ENCODE measurements at regions of chr1 and their contacts with region 1.

Region 1: GRCh38 chr1:146012737-146013403 is 8.7 kb downstream of the HJV start:
- DNase-seq: no peak
- ATAC-seq: peak; percentile 15 to 18
- H3K4me3 ChIP-seq: no peak overlapping the region
- H3K27ac ChIP-seq: no peak overlapping the region
- H3K4me1 ChIP-seq: peaks cover 1% of the 10 kb centered on the region
- H3K27me3 ChIP-seq: no peaks in the 10 kb centered on the region

Region 2: GRCh38 chr1:145845514-145846161 is 167.2 kb before region 1 on chr1 and contains the start of gene NUDT17:
- intact Hi-C with region 1: loop called (anchors 5 to 10 kb)
- DNase-seq: peak; percentile 87 to 94 (median 92)
- ATAC-seq: peak; percentile 85 to 88
- H3K4me3 ChIP-seq: peak within 1 kb of the TSS; percentile 63
- H3K27ac ChIP-seq: peak within 1 kb of the TSS; percentile 63
- H3K4me1 ChIP-seq: no peaks in the 10 kb centered on the region
- H3K27me3 ChIP-seq: no peaks in the 10 kb centered on the region
- total RNA-seq, gene NUDT17: 4.1 to 7.2 (median 5.1) TPM

Region 3: GRCh38 chr1:145891587-145892485 is 121.0 kb before region 1 on chr1:
- intact Hi-C with region 1: loop called (anchors 5 to 10 kb)
- DNase-seq: peak; percentile 93 to 97 (median 94)
- ATAC-seq: peak; percentile 89 to 92
- H3K4me3 ChIP-seq: peak overlapping the region; percentile 2
- H3K27ac ChIP-seq: peak overlapping the region; percentile 86
- H3K4me1 ChIP-seq: peaks cover 9% of the 10 kb centered on the region
- H3K27me3 ChIP-seq: no peaks in the 10 kb centered on the region

Region 4: GRCh38 chr1:145906954-145907753 is 105.7 kb before region 1 on chr1:
- intact Hi-C with region 1: no loop called
- DNase-seq: no peak
- ATAC-seq: peak; percentile 40 to 81
- H3K4me3 ChIP-seq: no peak overlapping the region
- H3K27ac ChIP-seq: peak overlapping the region; percentile 69
- H3K4me1 ChIP-seq: peaks cover 5% of the 10 kb centered on the region
- H3K27me3 ChIP-seq: no peaks in the 10 kb centered on the region

Region 5: DNA sequence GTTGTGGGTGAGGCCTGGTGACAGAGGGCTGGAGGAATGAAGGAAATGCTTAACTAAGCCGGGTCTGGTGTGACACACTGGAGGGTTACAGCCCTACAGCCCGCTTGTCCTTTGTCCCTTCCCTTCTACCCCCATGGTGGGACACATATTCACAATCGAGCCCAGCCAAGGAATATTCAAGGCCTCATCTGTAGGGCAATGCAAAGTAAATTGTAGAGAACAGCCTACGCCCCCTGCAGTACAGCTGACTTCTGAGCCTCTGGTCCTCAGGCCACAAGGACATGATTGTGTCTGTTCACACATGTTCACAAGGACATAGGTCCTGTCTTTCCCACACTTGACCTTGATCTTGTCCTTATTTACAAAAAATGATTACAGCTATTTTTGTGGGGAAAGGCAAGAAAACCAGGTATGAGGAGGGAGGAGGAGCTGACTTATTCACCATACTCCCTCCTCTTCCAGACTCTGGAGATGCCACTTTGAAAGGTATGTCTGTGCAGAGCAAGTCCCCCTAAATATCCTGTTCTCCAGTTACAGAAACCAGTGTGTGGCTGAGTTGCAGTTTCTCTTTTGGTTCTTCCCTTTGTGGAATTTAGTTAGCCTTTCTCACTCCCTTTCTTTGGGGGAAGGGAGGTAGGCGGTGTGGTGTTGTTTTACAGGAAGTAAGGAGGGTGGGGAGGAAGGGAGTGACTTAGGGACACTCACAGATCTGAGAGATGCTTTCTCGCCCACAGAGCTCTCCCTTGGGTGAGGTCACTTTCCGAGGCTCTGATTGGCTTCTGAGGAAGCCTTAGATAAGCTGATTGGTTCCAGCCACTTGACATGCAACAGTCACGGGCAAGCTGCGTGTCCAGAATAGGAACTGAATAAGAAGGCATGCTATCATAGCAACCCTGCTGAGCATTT is 33.8 kb before region 1 on chr1:
- intact Hi-C with region 1: loop called in 2 of 4 experiments (anchors 2 to 5 kb)
- DNase-seq: peak; percentile 93 to 96 (median 94)
- ATAC-seq: peak; percentile 95 to 97
- H3K4me3 ChIP-seq: peak overlapping the region; percentile 39
- H3K27ac ChIP-seq: peak overlapping the region; percentile 100
- H3K4me1 ChIP-seq: peaks cover 27% of the 10 kb centered on the region
- H3K27me3 ChIP-seq: no peaks in the 10 kb centered on the region

Measured in right cardiac atrium (tissue), 5 donors.